GM12878 (cell line): ENCODE measurements at regions of chr1 and their contacts with region 1.

Region 1: DNA sequence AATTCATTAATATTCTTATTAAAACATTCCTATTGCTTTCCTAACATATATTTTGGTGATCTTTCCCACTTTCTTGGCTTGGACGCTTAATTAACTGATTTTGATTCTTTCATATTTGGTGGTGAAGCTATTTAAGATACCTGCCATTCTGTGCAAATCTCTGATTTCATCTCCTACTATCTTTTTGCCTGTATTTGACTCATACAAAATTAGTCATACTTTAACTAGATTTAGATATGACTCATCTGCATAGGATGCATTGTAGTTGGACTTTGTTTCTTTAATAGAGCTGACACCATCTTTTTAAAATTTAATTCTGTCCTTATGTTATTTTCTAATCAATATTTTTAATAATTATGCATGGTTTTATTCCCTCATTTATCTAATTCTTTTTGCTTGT is 93.8 kb upstream of the PLPPR4 start:
- DNase-seq: no peak
- ATAC-seq: no peak
- H3K4me3 ChIP-seq: no peak overlapping the region
- H3K27ac ChIP-seq: no peak overlapping the region
- H3K4me1 ChIP-seq: no peaks in the 10 kb centered on the region
- H3K27me3 ChIP-seq: no peaks in the 10 kb centered on the region
- CTCF ChIP-seq: no peak
- EP300 ChIP-seq: no peak
- POLR2A ChIP-seq: no peak
- RAD21 ChIP-seq: no peak

Region 2: GRCh38 chr1:99472893-99473292 is 302.4 kb after region 1 on chr1:
- CTCF ChIA-PET with region 1: no interaction called
- POLR2A ChIA-PET with region 1: no interaction called
- RAD21 ChIA-PET with region 1: no interaction called
- SMC1A ChIA-PET with region 1: no interaction called
- in situ Hi-C with region 1: loop called (anchors 10 kb)
- intact Hi-C with region 1: no loop called
- DNase-seq: no peak
- ATAC-seq: no peak
- H3K4me3 ChIP-seq: no peak overlapping the region
- H3K27ac ChIP-seq: no peak overlapping the region
- H3K4me1 ChIP-seq: no peaks in the 10 kb centered on the region
- H3K27me3 ChIP-seq: no peaks in the 10 kb centered on the region
- CTCF ChIP-seq: no peak
- EP300 ChIP-seq: no peak
- POLR2A ChIP-seq: no peak
- RAD21 ChIP-seq: no peak

Region 3: GRCh38 chr1:99481391-99481996 is 311.0 kb after region 1 on chr1:
- CTCF ChIA-PET with region 1: interaction called, 16 read pairs
- POLR2A ChIA-PET with region 1: no interaction called
- RAD21 ChIA-PET with region 1: no interaction called
- SMC1A ChIA-PET with region 1: no interaction called
- in situ Hi-C with region 1: loop called (anchors 10 kb)
- intact Hi-C with region 1: no loop called
- DNase-seq: no peak
- ATAC-seq: peak; percentile 82
- H3K4me3 ChIP-seq: no peak overlapping the region
- H3K27ac ChIP-seq: no peak overlapping the region
- H3K4me1 ChIP-seq: no peaks in the 10 kb centered on the region
- H3K27me3 ChIP-seq: peaks cover 0 to 2% of the 10 kb centered on the region in 2 experiments; a peak in 1 of 4 replicates
- CTCF ChIP-seq: peak; percentile 62 to 71 (median 63)
- EP300 ChIP-seq: no peak
- POLR2A ChIP-seq: no peak
- RAD21 ChIP-seq: peak; percentile 87